ENCODE measurements at regions of chr1 and their contacts with region 1.

Region 1: GRCh38 chr1:33055210-33056008 is 18.7 kb upstream of the AK2 start:
- DNase-seq: peak; percentile 67 to 82
- ATAC-seq: peak; percentile 76

Region 2: GRCh38 chr1:32915766-32916706 is 139.4 kb before region 1 on chr1:
- intact Hi-C with region 1: no loop called
- DNase-seq: no peak
- ATAC-seq: no peak

Region 3: GRCh38 chr1:32933742-32934322 is 121.6 kb before region 1 on chr1:
- intact Hi-C with region 1: loop called in 1 of 2 experiments (anchors 5 kb)
- DNase-seq: peak; percentile 63 to 84
- ATAC-seq: peak; percentile 78

Region 4: GRCh38 chr1:33111970-33112369 is 56.6 kb after region 1 on chr1:
- intact Hi-C with region 1: no loop called
- DNase-seq: no peak
- ATAC-seq: no peak

Region 5: GRCh38 chr1:33152685-33153432 is 97.5 kb after region 1 on chr1:
- intact Hi-C with region 1: no loop called
- DNase-seq: peak in 1 of 2 donors; percentile 11
- ATAC-seq: no peak